PC-9 (cell line): ENCODE measurements at regions of chr1 and their contacts with region 1.

Region 1: GRCh38 chr1:6613361-6614018 is at the start of gene PHF13:
- DNase-seq: peak; percentile 87 to 99
- H3K4me3 ChIP-seq: peak within 1 kb of the TSS; percentile 64
- H3K27ac ChIP-seq: peak within 1 kb of the TSS; percentile 73
- H3K4me1 ChIP-seq: peaks cover 11% of the 10 kb centered on the region
- H3K27me3 ChIP-seq: no peaks in the 10 kb centered on the region
- CTCF ChIP-seq: no peak
- total RNA-seq, gene PHF13: 18.2 and 20.9 TPM in 2 replicates

Region 2: GRCh38 chr1:6222636-6223035 is 390.9 kb before region 1 on chr1:
- CTCF ChIA-PET with region 1: no interaction called
- POLR2A ChIA-PET with region 1: no interaction called
- intact Hi-C with region 1: loop called (anchors 10 kb)
- DNase-seq: peak in 1 of 2 experiments; percentile 63
- H3K4me3 ChIP-seq: no peak overlapping the region
- H3K27ac ChIP-seq: no peak overlapping the region; the same call in 1 of the 2 replicates
- H3K4me1 ChIP-seq: peaks cover 58% of the 10 kb centered on the region
- H3K27me3 ChIP-seq: no peaks in the 10 kb centered on the region
- CTCF ChIP-seq: no peak

Region 3: GRCh38 chr1:6602669-6603237 is 10.7 kb before region 1 on chr1 and contains the start of gene KLHL21:
- CTCF ChIA-PET with region 1: no interaction called
- POLR2A ChIA-PET with region 1: no interaction called
- intact Hi-C with region 1: loop called (anchors 1 kb)
- DNase-seq: peak; percentile 54 to 90
- H3K4me3 ChIP-seq: peak within 1 kb of the TSS; percentile 86
- H3K27ac ChIP-seq: peak within 1 kb of the TSS; percentile 84
- H3K4me1 ChIP-seq: no peaks in the 10 kb centered on the region
- H3K27me3 ChIP-seq: no peaks in the 10 kb centered on the region
- CTCF ChIP-seq: no peak
- total RNA-seq, gene KLHL21: 20.6 and 24.4 TPM in 2 replicates